Body of pancreas (tissue), 4 donors: ENCODE measurements at regions of chr14 and their contacts with region 1.

Region 1: GRCh38 chr14:52640137-52640536 is 55.2 kb downstream of the ERO1A start:
- DNase-seq: no peak
- ATAC-seq: no peak
- H3K4me3 ChIP-seq: no peak overlapping the region
- H3K27ac ChIP-seq: no peak overlapping the region
- H3K4me1 ChIP-seq: no peaks in the 10 kb centered on the region
- H3K27me3 ChIP-seq: no peaks in the 10 kb centered on the region
- CTCF ChIP-seq: no peak
- POLR2A ChIP-seq: no peak

Region 2: DNA sequence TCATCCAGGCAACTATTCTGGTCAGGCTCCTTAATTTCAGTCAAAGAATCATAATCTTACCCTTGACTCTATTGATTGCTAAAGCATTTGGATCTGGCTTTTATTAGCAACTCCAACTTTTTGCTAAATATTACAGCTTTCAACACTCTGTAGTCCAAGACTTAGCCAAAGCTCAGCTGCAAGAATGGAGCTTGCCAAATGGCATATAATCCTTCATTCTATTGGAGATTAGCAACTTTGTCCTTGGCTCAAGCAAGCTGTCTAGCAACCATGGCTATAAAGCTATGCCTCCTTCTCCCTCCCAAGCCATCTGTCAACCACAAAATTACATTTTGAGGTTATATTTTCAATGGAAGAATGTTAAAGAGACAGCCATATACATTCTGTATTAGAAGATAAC is 548.2 kb before region 1 on chr14:
- intact Hi-C with region 1: loop called (anchors 10 kb)
- DNase-seq: no peak
- ATAC-seq: no peak
- H3K4me3 ChIP-seq: no peak overlapping the region
- H3K27ac ChIP-seq: no peak overlapping the region
- H3K4me1 ChIP-seq: no peaks in the 10 kb centered on the region
- H3K27me3 ChIP-seq: no peaks in the 10 kb centered on the region
- CTCF ChIP-seq: no peak
- POLR2A ChIP-seq: no peak